ENCODE measurements at regions of chr6 and their contacts with region 1.

Region 1: GRCh38 chr6:41066867-41067304 is 5.3 kb downstream of the OARD1 start:
- DNase-seq: peak; percentile 70 to 88 (median 80)
- ATAC-seq: no peak
- H3K4me3 ChIP-seq: no peak overlapping the region
- H3K27ac ChIP-seq: no peak overlapping the region
- H3K4me1 ChIP-seq: no peaks in the 10 kb centered on the region
- H3K27me3 ChIP-seq: no peaks in the 10 kb centered on the region

Region 2: GRCh38 chr6:41000248-41000647 is 66.6 kb before region 1 on chr6:
- intact Hi-C with region 1: loop called in 3 of 4 experiments (anchors 5 to 10 kb)
- DNase-seq: no peak
- ATAC-seq: no peak
- H3K4me3 ChIP-seq: no peak overlapping the region
- H3K27ac ChIP-seq: no peak overlapping the region
- H3K4me1 ChIP-seq: peaks cover 2% of the 10 kb centered on the region
- H3K27me3 ChIP-seq: no peaks in the 10 kb centered on the region

Region 3: GRCh38 chr6:41008011-41008410 is 58.9 kb before region 1 on chr6:
- intact Hi-C with region 1: loop called in 3 of 4 experiments (anchors 5 to 10 kb)
- DNase-seq: no peak
- ATAC-seq: no peak
- H3K4me3 ChIP-seq: no peak overlapping the region
- H3K27ac ChIP-seq: no peak overlapping the region
- H3K4me1 ChIP-seq: peaks cover 2% of the 10 kb centered on the region
- H3K27me3 ChIP-seq: no peaks in the 10 kb centered on the region

Measured in right cardiac atrium (tissue), 5 donors.